Sigmoid colon (tissue), 7 donors: ENCODE measurements at regions of chr1 and their contacts with region 1.

Region 1: GRCh38 chr1:111709986-111710385 is 29.2 kb downstream of the INKA2 start:
- DNase-seq: no peak
- H3K4me3 ChIP-seq: no peak overlapping the region
- H3K27ac ChIP-seq: peak overlapping the region in 1 of 4 donors; percentile 45
- H3K4me1 ChIP-seq: peaks cover 0 to 19% (median 14%) of the 10 kb centered on the region in 4 donors
- H3K27me3 ChIP-seq: no peaks in the 10 kb centered on the region
- CTCF ChIP-seq: no peak
- EP300 ChIP-seq: no peak
- POLR2A ChIP-seq: no peak

Region 2: GRCh38 chr1:111481387-111482221 is 228.4 kb before region 1 on chr1:
- intact Hi-C with region 1: loop called (anchors 5 kb)
- DNase-seq: peak; percentile 91
- H3K4me3 ChIP-seq: no peak overlapping the region
- H3K27ac ChIP-seq: peak overlapping the region in 1 of 4 donors; percentile 33
- H3K4me1 ChIP-seq: peaks cover 0 to 19% (median 11%) of the 10 kb centered on the region in 4 donors
- H3K27me3 ChIP-seq: no peaks in the 10 kb centered on the region
- CTCF ChIP-seq: peak; percentile 61 to 83 (median 81)
- EP300 ChIP-seq: no peak
- POLR2A ChIP-seq: no peak

Region 3: DNA sequence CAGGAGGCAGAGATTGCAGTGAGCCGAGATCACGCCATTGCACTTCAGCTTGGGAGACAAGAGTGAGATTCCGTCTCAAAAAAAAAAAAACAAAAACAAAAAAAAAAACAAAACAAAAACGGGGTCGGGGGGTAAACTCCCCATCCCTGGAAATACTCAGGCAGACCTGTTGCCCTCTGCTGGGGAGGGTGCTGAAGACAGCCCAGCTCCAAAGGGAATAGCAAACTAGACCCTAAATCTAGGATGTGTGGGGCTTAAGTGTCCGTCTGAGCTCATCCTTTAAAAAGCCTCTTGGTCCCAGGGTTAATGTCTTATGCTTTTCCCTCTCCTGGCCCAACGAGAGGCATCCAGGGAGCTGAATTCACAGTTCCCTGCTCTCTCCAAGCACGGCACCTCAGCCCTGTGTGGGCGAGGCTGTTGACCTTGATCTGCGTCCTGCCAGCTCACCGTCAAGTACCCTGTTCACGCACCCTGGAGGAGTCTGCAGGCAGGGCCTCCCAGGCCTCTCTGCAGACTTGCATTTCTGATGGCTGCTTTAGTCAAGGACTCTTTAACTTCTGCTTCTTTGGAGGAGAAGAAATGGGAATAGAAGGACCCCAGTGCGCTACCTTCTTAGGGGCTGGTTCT is 257.2 kb after region 1 on chr1:
- intact Hi-C with region 1: no loop called
- DNase-seq: no peak
- H3K4me3 ChIP-seq: no peak overlapping the region
- H3K27ac ChIP-seq: peak overlapping the region; percentile 44 to 64 (median 59)
- H3K4me1 ChIP-seq: peaks cover 0 to 38% (median 23%) of the 10 kb centered on the region in 4 donors
- H3K27me3 ChIP-seq: no peaks in the 10 kb centered on the region
- CTCF ChIP-seq: no peak
- EP300 ChIP-seq: no peak
- POLR2A ChIP-seq: no peak